Common myeloid progenitor, CD34-positive (primary cell): ENCODE measurements at regions of chr1 and their contacts with region 1.

Region 1: DNA sequence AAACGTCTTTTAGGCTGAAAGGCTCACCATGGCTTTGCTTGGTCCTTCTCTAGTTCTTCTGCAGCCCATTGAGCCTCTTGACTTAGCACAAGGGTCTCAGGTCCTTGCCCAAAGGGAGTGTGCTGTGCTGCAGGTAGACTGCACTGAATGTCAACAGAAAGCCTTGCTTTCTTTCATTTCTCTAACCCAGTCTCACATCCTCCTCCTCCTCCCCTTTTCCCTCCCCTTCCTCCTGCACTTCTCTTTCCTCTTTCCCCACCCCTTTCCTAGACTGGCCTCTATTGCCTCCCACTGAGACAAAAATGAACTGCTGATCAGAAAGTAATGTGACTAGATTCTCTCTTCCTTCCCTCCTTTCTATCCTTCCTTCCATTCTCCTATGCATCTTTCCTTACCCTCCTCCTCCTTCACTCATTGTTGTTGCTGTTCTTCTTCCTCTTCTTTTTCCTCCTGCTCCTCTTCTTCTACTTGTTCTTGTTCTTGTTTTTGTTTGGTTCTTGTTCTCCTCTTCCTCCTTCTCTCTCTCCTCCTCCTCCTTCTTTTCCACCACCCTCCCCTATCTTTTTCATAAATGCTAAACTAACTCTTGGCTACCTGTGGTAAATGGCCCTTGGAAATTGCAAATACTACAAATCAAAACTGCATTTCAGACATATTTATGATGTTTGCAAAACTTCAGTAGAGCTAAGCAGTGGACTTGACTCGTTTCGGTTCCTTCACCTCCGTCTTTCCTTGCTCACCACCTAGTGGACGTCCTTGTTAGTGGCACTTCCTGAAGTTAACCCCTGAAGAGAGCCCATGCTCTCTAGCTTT is at the start of gene SELL:
- DNase-seq: peak; percentile 90 to 94 (median 93)
- H3K4me3 ChIP-seq: peak within 1 kb of the TSS; percentile 46 to 89 (median 82)
- H3K27ac ChIP-seq: peak within 1 kb of the TSS; percentile 75 to 85
- H3K4me1 ChIP-seq: peaks cover 16 to 41% (median 37%) of the 10 kb centered on the region in 4 experiments
- H3K27me3 ChIP-seq: no peaks in the 10 kb centered on the region

Region 2: DNA sequence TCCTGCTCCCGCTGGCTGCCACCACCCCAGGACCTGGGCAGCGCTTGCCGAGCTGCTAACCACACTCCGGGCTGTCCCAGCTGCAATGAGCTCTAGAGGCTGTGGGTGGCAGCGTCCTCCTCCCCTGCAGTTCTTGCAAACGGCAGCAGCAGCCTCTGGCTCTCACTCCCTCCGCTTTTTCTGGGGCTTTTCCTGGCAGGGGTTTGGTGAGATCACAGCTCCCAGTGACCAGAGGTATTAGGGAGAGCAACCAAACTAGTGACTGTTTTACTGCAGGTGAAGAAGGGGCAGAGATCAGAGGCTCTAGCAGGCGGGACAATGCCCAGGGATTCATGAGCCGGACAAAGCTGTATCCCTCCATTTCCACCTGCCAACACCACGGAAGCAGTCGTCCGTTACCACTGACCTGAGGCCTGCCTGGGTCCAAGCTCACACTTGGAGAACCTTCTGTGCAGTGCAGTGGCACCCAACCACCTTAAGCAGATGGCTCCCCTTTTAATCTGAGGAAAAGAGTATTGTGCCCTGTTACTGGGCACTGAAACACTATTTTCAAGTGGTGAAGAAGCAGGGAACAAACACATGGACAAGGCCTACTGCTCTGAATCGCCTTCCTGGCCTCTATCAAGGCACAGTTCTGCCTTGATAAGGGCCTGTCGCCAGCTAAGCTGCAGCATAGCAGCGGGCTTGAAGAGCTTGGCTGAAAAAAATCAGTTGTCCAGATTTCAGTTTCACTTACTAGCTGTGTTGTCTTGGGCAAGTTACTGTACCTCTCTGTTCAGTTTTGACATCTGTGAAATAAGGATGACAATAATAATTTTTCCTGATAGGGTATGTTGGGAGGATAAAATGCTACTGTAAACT is 125.0 kb before region 1 on chr1 and contains the start of gene F5:
- CTCF ChIA-PET with region 1: interaction called, 16 read pairs
- POLR2A ChIA-PET with region 1: no interaction called
- DNase-seq: peak; percentile 78 to 89 (median 85)
- H3K4me3 ChIP-seq: peak within 1 kb of the TSS in 6 of 7 experiments; percentile 34 to 77 (median 56)
- H3K27ac ChIP-seq: no peak within 1 kb of the TSS
- H3K4me1 ChIP-seq: peaks cover 2 to 22% (median 15%) of the 10 kb centered on the region in 4 experiments
- H3K27me3 ChIP-seq: no peaks in the 10 kb centered on the region

Region 3: DNA sequence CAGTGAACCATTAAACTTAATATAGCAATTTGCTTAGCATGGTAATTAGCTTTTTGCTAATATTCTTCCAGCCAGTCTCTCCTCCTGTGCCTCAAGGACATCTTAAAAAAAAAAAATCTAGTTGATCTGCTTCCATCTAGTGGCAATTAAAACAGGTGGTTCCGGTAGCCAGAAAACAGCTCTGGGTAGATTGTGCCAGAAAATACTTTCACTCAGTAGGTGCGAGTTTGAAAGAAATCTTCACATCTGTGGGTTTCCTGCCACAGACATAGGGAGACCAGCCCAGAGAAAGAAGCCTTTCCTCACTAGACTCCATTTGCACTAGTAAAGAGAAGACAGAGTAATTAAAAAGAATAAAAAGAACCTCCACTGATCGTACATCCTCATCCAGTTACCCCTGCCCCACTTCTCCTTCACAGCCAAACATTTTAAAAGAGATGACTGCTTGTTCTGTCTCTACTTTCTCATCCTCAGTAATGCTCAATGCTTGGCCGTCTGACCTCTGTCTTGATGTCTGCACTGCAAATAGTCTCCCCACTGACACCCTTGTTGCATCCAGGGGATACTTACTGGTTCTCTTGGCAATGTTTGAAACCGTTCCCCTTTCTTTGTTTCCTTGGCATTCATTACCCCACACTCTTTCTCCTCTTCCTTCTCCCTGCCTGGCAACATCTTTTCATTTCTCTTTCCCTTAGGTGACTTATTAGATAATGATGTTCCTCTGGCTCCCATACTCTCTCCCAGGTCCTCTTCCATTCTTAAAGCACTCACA is 17.2 kb before region 1 on chr1:
- CTCF ChIA-PET with region 1: interaction called, 65 read pairs
- POLR2A ChIA-PET with region 1: no interaction called
- DNase-seq: peak; percentile 69 to 94 (median 90)
- H3K4me3 ChIP-seq: peak overlapping the region in 2 of 7 experiments; percentile 28 to 43
- H3K27ac ChIP-seq: peak overlapping the region; percentile 52 to 77
- H3K4me1 ChIP-seq: peaks cover 52 to 97% (median 82%) of the 10 kb centered on the region in 4 experiments
- H3K27me3 ChIP-seq: no peaks in the 10 kb centered on the region

Region 4: DNA sequence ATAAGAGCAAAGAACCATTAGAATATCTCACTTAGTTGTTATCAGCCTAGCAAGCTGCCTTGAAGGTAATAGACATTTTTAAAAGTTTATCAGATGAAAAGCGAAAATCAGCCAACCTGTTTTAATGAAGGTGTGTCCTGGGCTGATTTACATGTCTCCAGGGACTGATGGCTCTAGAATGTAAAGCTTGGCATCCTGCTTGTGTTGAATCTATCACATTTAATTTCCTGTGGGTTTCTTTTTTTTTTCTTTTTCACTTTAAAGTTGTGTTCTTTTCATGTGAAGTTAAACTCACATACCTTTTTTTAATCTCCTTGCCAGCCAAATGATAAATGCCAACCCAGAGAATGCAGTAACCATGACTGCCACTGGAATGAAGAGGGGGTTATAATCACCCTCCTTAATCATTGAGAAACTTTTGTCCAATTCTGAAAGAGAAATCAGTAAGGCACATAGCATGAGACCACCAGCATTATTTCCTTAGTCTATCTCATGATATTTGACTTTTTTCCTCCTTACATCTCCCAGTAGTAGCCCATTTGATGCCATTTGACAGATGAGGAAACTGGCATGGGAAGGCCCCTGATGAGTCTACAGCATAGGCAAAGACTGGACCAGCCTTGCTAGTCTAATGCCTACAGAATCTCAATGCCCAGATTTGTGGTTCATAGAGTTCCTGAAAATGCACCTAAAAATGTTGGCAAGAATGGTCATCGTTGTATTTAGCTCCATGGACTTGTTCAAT is 10.2 kb before region 1 on chr1:
- CTCF ChIA-PET with region 1: interaction called, 65 read pairs
- POLR2A ChIA-PET with region 1: no interaction called
- DNase-seq: no peak
- H3K4me3 ChIP-seq: peak overlapping the region in 1 of 7 experiments; percentile 7
- H3K27ac ChIP-seq: peak overlapping the region in 1 of 2 experiments; percentile 55
- H3K4me1 ChIP-seq: peaks cover 53 to 98% (median 72%) of the 10 kb centered on the region in 4 experiments
- H3K27me3 ChIP-seq: no peaks in the 10 kb centered on the region

Region 5: DNA sequence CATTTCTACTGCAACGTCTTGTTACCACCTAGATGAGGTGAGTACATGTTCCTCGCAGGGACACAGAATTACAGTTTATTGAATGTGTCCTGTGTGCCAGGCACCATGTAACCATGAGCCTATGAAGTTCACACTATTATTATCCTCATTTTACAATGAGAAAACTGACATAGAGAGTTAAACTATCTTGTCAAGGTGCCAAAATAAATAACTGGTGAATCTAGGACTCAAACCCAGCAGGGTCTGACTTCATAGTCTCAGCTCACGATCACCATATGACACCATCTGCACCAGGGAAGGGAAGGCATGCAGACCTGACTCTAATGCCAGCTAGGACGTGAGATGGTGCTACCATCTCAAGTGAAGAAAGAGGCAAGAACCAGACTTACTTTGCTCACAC is 19.8 kb after region 1 on chr1:
- CTCF ChIA-PET with region 1: no interaction called
- POLR2A ChIA-PET with region 1: no interaction called
- DNase-seq: no peak
- H3K4me3 ChIP-seq: no peak overlapping the region
- H3K27ac ChIP-seq: no peak overlapping the region
- H3K4me1 ChIP-seq: no peaks in the 10 kb centered on the region
- H3K27me3 ChIP-seq: no peaks in the 10 kb centered on the region

Region 6: GRCh38 chr1:169788402-169788801 is 76.7 kb after region 1 on chr1:
- CTCF ChIA-PET with region 1: no interaction called
- POLR2A ChIA-PET with region 1: no interaction called
- DNase-seq: no peak
- H3K4me3 ChIP-seq: no peak overlapping the region
- H3K27ac ChIP-seq: no peak overlapping the region
- H3K4me1 ChIP-seq: peaks cover 0 to 2% (median under 1%) of the 10 kb centered on the region in 4 experiments
- H3K27me3 ChIP-seq: peaks cover 0 to 10% (median 0%) of the 10 kb centered on the region in 5 experiments

Region 7: GRCh38 chr1:169802888-169803287 is 91.2 kb after region 1 on chr1:
- CTCF ChIA-PET with region 1: no interaction called
- POLR2A ChIA-PET with region 1: no interaction called
- DNase-seq: peak; percentile 24 to 73 (median 60)
- H3K4me3 ChIP-seq: peak overlapping the region in 1 of 7 experiments; percentile 33
- H3K27ac ChIP-seq: peak overlapping the region in 1 of 2 experiments; percentile 51
- H3K4me1 ChIP-seq: peaks cover 0 to 14% (median 9%) of the 10 kb centered on the region in 4 experiments
- H3K27me3 ChIP-seq: no peaks in the 10 kb centered on the region